Common myeloid progenitor, CD34-positive (primary cell): ENCODE measurements at regions of chr11 and their contacts with region 1.

Region 1: DNA sequence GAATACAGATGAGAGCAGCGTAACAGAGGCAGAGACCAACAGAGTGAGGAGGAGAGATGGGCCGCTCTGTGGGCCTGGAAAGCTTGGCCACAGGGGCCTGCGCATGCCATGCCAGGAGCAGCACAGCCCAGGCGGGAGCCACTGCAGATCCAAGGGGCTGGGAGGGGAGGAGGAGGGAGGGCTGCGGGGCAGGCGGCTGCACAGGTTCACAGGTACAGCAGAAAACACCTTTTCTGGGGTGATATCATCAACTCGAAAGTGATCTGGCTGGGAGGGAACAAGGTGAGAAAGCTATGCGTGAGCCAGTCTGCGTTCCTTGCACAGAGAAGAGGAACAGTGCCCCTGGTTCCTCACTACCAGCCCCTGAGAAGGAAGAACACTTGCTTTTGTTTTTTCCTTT is 14.8 kb downstream of the VPS37C start:
- DNase-seq: peak in 2 of 3 donors; percentile 37 to 51
- H3K4me3 ChIP-seq: peak overlapping the region in 1 of 7 experiments; percentile 1
- H3K27ac ChIP-seq: no peak overlapping the region
- H3K4me1 ChIP-seq: peaks cover 0 to 37% (median 28%) of the 10 kb centered on the region in 4 experiments
- H3K27me3 ChIP-seq: no peaks in the 10 kb centered on the region

Region 2: DNA sequence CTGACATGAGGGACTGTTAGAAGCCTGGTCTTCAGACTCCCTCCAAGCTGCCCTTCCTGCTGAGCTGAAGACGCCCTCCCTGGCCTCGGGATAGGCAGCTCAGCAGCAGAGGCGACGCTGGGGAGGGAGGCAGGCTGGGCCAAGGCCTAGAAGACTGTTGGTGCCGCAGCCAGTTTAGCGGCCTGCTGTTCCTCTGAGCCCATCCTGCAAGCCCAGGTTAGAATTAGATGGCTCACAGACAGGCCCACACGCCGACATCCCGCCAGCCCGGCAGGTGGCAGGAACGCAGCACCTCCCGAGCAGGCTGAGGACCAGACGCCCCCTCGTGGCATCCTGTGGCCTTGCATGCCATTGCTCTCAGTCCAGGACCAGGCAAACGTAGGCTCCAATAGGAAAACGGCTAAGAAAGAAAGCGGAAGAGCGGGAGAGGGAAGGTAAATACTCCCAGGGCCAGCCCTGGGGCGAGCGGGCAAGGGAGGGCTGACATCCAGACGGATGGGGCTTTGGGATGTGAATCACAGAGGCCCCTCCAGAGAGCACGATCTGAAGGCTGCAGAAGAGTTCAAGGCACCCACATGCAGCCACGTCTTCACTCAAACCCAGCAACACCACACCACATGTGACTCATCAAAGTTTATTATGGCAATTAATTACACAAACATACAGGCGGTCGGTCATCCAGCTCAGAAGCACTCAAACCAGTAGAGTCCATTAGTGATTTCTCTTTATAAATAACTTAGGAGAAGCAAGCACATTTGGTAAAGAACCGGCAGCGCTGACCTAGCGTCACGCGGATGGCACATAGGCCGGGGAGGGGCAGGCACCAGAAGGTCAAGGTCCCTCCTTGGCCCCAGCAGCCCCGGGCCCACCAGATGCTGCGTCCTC is 16.5 kb before region 1 on chr11:
- CTCF ChIA-PET with region 1: interaction called, 10 read pairs
- POLR2A ChIA-PET with region 1: no interaction called
- DNase-seq: peak; percentile 83 to 88 (median 87)
- H3K4me3 ChIP-seq: peak overlapping the region in 3 of 7 experiments; percentile 19 to 50 (median 44)
- H3K27ac ChIP-seq: no peak overlapping the region
- H3K4me1 ChIP-seq: peaks cover 0 to 9% (median 7%) of the 10 kb centered on the region in 4 experiments
- H3K27me3 ChIP-seq: no peaks in the 10 kb centered on the region